Activated CD4-positive, alpha-beta T cell treated with anti-CD3 and anti-CD28 coated beads, Interleukin-2, amount 10 ng/mL, durations not matched to agents 24 days and 14 days (primary cell): ENCODE measurements at regions of chr12 and their contacts with region 1.

Region 1: DNA sequence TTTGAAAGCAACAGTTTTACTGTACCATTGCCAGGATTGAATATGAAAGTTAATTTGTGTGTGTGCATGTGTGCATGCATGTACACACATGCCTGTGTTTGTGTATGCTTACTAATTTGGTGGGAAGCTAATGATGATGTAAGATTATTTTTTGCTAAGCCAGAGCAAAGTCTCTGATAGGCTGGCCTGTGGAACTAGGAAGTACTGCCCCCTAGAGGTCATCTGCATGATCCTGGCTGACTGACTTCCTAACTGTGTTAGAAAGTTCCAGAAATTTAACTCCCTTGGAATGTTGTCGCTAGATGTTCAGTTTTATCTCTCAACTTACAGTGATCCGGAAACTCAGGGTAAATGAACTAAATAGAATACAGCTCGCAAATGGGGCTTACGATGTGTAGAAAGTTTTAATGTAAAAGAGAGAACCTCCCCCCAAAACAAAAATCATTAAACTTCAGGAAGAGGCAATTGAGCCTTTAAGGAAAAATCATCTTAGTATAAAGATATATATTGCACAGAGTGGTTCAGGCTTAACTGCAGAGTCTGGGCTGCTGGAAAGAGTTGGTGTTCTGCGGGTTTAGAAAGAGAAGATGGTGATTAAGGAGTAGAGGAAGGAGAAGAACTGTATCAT is 34.3 kb upstream of the SLC38A1 start:
- DNase-seq: peak; percentile 82
- H3K4me3 Mint-ChIP-seq: no peak overlapping the region
- H3K27ac Mint-ChIP-seq: no peak overlapping the region
- H3K4me1 Mint-ChIP-seq: peaks cover 3% of the 10 kb centered on the region
- H3K27me3 Mint-ChIP-seq: peaks cover 10% of the 10 kb centered on the region

Region 2: DNA sequence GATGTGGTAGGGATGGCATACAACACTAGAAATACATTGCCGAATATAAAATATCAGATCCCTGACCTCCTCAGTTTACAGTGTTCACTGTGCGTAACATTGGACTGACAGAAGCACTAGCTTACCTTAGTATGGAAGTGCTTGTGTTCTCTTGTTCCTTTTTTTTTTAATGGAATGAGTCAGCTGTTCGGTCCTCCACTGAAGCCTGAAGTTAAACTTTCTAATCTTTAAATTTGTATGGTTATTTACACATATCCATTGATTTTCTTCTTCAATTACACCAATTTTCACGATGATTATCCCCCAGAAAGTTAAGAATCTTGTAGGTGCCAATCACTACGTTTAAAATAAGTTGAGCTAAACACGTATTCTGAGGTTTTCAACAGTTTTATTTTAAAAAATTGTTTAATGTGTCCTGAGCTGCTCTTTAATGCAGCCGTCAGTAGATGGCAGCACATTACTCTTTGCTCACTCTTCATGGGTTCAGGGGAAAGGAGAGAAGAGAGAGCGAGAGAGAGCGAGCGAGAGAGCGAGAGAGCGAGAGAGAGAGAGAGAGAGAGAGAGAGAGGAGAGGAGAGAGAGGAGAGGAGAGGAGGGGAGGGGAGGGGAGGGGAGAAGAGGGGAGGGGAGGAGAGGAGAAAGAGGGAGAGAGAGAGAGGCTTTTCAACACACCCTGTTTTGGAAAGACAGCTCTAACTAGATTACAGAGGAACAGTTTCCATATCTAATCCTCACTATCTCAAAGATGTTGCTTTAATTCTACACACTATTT is 178.1 kb before region 1 on chr12:
- intact Hi-C with region 1: loop called (anchors 2 kb)
- DNase-seq: peak; percentile 87
- H3K4me3 Mint-ChIP-seq: peak overlapping the region; percentile 56
- H3K27ac Mint-ChIP-seq: peak overlapping the region; percentile 75
- H3K4me1 Mint-ChIP-seq: peaks cover 5% of the 10 kb centered on the region
- H3K27me3 Mint-ChIP-seq: peaks cover 49% of the 10 kb centered on the region

Region 3: GRCh38 chr12:46153268-46153872 is 149.8 kb before region 1 on chr12:
- intact Hi-C with region 1: loop called (anchors 1 kb)
- DNase-seq: no peak
- H3K4me3 Mint-ChIP-seq: no peak overlapping the region
- H3K27ac Mint-ChIP-seq: no peak overlapping the region
- H3K4me1 Mint-ChIP-seq: no peaks in the 10 kb centered on the region
- H3K27me3 Mint-ChIP-seq: peaks cover 11% of the 10 kb centered on the region